ENCODE measurements at regions of chr17 and their contacts with region 1.

Region 1: GRCh38 chr17:31524926-31525800 is 133.7 kb downstream of the RAB11FIP4 start:
- DNase-seq: peak; percentile 93
- ATAC-seq: peak; percentile 89

Region 2: DNA sequence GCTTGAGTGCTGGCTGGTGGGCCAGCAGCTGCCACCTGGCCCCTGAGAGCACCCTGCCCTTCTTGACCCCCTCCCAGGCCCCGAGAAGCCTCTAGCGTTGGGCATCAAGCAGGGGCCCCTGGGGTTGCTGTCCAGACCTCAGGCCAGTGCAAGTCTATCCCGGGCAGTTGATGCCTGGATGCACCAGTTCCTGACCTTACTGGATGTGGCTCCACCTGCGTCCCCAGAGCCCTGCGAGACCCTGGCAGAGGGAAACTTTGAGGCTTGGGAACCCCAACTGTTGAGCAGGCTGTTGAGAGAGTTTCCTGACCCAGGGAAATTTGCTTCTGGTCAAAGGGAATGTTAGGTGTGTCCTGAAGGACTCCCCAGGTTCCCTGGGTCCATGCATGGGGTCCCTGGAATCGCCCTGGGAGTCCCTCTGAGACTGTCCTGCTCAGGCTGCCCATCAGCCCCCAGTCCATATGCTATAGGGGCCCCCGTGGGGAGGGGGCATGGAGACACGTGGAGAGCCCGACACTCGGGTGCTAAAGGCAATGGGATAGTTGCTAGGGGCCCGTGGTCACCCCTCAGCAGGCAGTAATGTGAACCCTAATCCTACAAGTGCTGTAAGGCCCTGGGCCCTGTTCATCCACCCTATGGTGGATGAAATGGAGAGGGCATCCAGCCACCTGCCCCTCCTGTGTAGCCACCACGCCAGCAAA is 87.3 kb before region 1 on chr17:
- intact Hi-C with region 1: loop called (anchors 5 kb)
- DNase-seq: no peak
- ATAC-seq: peak; percentile 35

Region 3: DNA sequence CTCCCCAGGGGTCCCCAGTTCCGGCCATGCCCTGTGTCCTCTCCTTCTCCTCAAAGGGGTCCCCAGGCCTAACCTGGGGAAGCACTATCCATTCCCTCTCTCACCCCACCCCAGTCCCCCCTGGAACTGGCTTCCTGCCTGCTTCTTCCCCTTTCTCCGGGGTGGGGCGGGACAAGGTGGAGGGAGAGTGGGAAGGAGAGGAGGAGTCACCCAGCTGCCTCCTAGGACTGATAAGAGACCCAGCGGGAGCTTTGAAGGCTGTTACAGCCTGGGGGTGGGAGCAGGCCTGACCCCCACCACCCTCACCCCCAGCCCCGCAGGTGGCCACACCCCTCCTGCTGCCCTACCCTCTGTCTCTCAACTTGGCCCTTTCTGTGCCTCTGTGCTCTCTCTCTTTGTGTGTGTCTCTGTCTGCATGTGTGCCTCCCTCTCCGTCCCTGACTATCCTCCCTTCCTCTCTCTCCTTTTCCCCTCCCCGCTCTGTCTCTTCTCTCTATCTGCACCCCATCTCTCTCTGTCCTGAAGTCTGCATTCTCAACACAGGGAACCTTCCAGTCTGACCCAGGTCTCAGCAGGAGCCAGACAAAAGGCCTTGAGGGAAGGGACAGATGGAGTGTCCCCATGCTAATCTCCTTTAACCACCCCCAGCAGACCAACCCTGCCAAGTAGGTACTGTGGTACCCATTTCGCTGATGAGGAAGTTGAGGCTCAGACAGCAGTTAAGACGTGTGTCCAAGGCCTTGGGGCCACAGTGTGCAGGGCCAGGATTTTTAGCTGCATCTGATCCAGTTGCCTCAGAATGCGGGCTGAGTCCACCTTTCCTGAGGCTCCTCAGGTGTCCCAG is 67.5 kb before region 1 on chr17:
- intact Hi-C with region 1: no loop called
- DNase-seq: no peak
- ATAC-seq: no peak